ENCODE measurements at regions of chr19 and their contacts with region 1.

Region 1: GRCh38 chr19:1905071-1905862 is at the starts of genes ADAT3 and SCAMP4:
- DNase-seq: peak; percentile 99
- H3K4me3 Mint-ChIP-seq: peak within 1 kb of the TSS; percentile 87
- H3K27ac Mint-ChIP-seq: peak within 1 kb of the TSS; percentile 86
- H3K4me1 Mint-ChIP-seq: peaks cover 36% of the 10 kb centered on the region
- H3K27me3 Mint-ChIP-seq: no peaks in the 10 kb centered on the region
- total RNA-seq, gene ADAT3: 5.7 to 5.8 TPM
- total RNA-seq, gene SCAMP4: 24.2 to 28.4 TPM

Region 2: DNA sequence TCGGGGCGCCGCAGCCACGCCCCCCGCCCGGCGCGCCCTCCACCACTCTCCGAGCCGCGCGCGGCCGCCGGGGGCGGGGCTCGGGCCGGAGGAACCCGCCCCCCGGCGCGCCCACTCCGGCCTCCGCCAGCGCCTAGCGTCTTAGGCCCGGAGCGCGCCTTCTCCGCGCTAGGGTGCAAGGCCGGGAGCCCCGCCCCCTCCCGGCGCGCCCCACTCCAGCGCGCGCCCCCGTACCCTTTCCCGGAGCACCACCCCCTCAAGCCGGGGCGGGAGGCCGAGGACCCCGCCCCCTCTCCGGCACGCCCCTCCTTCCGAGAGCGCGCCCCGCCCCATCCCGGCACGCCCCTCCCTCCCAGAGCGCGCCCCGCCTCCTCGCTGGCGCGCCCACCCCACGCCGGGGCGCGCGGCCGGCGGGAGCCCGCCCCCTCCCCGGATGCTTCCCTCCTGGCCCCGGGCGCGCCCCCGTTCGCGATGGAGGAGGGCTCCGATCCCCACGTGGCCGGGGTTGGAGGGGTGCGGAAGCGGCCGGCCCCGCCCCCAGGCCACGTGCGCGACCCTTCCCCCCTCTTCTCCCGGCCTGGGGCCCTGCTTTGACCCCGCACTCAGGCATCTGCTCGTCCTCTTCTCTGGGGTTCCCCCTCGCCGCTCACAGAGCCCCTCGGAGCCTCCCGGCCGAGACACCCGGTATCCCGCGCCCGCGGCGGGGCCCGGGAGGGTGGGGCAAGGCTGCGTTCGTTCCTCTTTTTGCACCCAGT is 41.4 kb before region 1 on chr19:
- CTCF ChIA-PET with region 1: interaction called, 5 read pairs
- POLR2A ChIA-PET with region 1: no interaction called
- intact Hi-C with region 1: loop called (anchors 1 kb)
- DNase-seq: peak; percentile 94
- H3K4me3 Mint-ChIP-seq: peak overlapping the region; percentile 75
- H3K27ac Mint-ChIP-seq: peak overlapping the region; percentile 69
- H3K4me1 Mint-ChIP-seq: peaks cover 33% of the 10 kb centered on the region
- H3K27me3 Mint-ChIP-seq: no peaks in the 10 kb centered on the region

Region 3: DNA sequence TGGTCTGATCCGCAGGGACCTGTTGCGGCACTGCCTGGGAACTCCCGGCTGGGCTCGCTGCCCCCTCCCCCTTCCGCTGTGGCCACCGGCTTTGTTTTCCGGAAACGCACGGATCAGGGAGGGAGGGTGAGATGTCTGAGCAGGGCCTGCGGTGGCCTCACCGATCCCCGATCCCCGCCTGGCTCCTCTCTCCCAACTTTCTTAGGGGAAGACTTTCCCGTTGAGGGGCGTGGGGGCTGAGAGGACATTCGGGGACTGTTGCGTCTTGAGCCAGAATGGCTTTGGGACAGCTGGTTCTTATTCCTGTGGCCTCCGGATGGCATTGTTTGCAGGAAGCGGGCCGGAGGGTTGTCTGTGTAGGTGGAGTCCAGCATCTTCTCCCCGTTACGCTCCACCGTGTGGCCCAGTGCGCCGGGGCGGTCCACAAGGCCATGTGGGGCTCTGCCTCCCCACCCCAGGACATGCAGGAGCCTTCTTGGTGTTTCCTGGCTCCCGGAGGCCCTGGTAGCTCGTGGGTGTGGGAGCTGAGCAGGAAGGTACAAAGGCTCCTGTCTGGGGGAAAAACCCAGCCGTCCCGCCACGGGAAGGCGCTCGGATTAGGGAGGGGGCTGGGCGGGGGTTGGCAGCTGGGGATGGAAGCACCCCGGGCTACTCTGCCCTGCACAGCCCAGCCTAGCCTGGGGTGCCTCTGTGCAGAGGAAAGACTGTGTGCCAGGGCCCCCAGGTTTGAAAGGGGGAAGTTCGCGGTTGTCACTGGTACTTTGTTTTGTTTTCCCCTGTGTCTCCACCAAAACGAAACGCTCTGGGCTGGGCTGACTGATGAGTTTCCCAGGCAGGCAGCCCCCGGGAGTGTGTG is 37.0 kb after region 1 on chr19:
- CTCF ChIA-PET with region 1: interaction called, 3 read pairs
- POLR2A ChIA-PET with region 1: no interaction called
- intact Hi-C with region 1: loop called (anchors 1 kb)
- DNase-seq: peak; percentile 89
- H3K4me3 Mint-ChIP-seq: peak overlapping the region; percentile 84
- H3K27ac Mint-ChIP-seq: peak overlapping the region; percentile 94
- H3K4me1 Mint-ChIP-seq: peaks cover 30% of the 10 kb centered on the region
- H3K27me3 Mint-ChIP-seq: no peaks in the 10 kb centered on the region